Activated CD4-positive, alpha-beta memory T cell treated with anti-CD3 and anti-CD28 coated beads, Interleukin-2, amount 10 ng/mL, durations not matched to agents 7 days and 5 days (primary cell): ENCODE measurements at regions of chr21 and their contacts with region 1.

Region 1: GRCh38 chr21:17780539-17780938 is 38.6 kb downstream of the C21orf91 start:
- DNase-seq: peak; percentile 61
- H3K4me3 Mint-ChIP-seq: peak overlapping the region; percentile 19
- H3K27ac Mint-ChIP-seq: peak overlapping the region; percentile 93
- H3K4me1 Mint-ChIP-seq: peaks cover 88% of the 10 kb centered on the region
- H3K27me3 Mint-ChIP-seq: no peaks in the 10 kb centered on the region

Region 2: GRCh38 chr21:17611414-17612022 is 169.0 kb before region 1 on chr21:
- CTCF ChIA-PET with region 1: no interaction called
- POLR2A ChIA-PET with region 1: interaction called, 26 read pairs
- DNase-seq: peak; percentile 85
- H3K4me3 Mint-ChIP-seq: peak overlapping the region; percentile 98
- H3K27ac Mint-ChIP-seq: peak overlapping the region; percentile 98
- H3K4me1 Mint-ChIP-seq: peaks cover 64% of the 10 kb centered on the region
- H3K27me3 Mint-ChIP-seq: no peaks in the 10 kb centered on the region

Region 3: DNA sequence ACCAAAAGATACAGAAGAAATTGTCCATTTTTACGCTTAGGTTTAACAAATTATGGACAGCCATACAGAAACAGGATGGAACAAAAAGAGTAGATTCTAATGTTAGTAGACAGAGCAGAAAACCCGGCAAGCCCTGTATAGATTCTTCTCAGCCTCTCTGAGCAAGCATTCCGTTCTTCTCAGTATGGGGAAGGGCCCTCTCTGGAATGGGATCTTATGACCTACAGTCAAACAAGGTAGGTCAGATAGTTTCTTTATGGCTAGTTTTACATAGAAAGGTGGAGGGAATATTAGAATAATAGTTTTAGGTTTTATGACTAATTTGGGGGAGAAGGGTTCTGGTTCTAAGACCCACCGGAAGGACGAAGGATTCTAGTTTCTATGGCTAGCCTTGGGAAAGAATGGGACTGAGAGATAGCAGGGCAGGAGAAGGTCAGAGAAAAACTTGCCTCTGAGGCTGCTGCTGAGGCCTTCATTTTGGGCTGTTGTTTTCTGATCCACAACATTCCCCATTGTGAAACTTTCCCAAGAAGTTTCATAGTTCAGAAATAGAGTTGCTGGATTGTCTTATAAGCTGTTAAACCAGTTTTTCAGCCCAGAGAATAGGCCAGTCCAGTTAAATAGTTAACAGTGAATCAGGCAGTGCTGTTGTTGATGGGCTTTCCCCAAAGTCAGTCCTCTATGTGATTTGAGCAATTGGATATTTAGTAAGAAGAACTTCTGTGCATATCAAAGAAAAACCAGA is 38.6 kb before region 1 on chr21:
- CTCF ChIA-PET with region 1: no interaction called
- POLR2A ChIA-PET with region 1: no interaction called
- DNase-seq: no peak
- H3K4me3 Mint-ChIP-seq: no peak overlapping the region
- H3K27ac Mint-ChIP-seq: no peak overlapping the region
- H3K4me1 Mint-ChIP-seq: no peaks in the 10 kb centered on the region
- H3K27me3 Mint-ChIP-seq: no peaks in the 10 kb centered on the region

Region 4: DNA sequence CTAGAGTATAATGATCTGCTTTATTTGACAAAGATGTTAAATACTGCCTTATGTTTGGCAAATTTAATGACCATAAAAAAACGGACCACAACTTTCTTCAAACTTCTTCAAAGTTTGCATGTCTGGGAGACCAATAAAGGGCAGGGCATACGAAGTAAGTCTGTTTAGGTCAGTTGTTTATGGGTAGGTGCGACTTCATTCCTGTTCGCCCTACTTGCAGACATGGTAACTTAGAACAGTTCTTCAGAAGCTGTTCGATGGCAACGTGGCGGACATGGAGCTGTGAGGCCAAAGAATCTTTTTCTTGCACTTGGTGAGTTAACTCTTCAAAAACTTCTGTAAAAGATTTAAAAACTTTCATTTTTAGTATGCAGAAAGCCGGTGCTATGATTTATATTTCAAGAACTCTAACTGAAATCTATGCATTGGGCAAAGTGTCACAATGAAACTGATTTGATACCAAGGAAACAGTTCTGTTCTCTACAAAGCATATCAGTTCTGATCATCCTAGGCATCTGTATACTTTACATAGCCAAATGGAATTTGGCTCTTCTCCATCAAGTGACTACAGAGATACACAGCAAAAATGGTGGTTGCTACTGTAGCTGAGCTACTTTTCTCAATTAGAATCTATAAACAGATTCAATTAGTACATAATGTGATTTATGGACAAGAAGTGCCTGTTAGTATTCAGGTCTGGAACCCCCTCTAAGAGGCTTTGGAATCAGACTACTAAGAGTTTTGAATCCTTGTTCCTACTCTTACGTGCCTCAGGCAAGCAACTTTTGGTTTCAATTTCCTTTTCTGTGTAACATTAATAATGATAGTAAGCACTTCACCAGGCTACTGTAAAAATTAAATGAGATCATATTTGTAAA is 12.9 kb after region 1 on chr21:
- CTCF ChIA-PET with region 1: interaction called, 7 read pairs
- POLR2A ChIA-PET with region 1: interaction called, 110 read pairs
- DNase-seq: no peak
- H3K4me3 Mint-ChIP-seq: peak overlapping the region; percentile 75
- H3K27ac Mint-ChIP-seq: peak overlapping the region; percentile 90
- H3K4me1 Mint-ChIP-seq: peaks cover 72% of the 10 kb centered on the region
- H3K27me3 Mint-ChIP-seq: no peaks in the 10 kb centered on the region

Region 5: DNA sequence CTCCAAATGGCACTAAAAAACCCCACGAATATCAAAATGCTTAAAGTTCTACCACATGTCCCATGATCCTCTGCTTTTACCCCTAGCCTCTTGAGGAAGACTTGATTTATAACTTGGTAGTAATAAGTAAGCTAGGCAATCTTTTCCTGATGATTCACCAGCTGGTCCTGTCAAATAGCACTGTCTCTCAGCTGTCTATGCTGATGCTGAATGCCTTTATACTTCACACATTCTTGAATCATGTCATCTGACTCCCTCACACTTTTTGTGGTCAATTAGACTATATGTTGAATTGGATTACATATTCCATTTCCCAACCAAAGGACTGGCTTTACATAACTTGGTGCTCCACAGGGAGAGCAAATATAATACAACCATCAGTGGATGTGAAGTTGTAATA is 22.0 kb after region 1 on chr21:
- CTCF ChIA-PET with region 1: no interaction called
- POLR2A ChIA-PET with region 1: interaction called, 11 read pairs
- DNase-seq: no peak
- H3K4me3 Mint-ChIP-seq: no peak overlapping the region
- H3K27ac Mint-ChIP-seq: no peak overlapping the region
- H3K4me1 Mint-ChIP-seq: peaks cover 40% of the 10 kb centered on the region
- H3K27me3 Mint-ChIP-seq: no peaks in the 10 kb centered on the region

Region 6: DNA sequence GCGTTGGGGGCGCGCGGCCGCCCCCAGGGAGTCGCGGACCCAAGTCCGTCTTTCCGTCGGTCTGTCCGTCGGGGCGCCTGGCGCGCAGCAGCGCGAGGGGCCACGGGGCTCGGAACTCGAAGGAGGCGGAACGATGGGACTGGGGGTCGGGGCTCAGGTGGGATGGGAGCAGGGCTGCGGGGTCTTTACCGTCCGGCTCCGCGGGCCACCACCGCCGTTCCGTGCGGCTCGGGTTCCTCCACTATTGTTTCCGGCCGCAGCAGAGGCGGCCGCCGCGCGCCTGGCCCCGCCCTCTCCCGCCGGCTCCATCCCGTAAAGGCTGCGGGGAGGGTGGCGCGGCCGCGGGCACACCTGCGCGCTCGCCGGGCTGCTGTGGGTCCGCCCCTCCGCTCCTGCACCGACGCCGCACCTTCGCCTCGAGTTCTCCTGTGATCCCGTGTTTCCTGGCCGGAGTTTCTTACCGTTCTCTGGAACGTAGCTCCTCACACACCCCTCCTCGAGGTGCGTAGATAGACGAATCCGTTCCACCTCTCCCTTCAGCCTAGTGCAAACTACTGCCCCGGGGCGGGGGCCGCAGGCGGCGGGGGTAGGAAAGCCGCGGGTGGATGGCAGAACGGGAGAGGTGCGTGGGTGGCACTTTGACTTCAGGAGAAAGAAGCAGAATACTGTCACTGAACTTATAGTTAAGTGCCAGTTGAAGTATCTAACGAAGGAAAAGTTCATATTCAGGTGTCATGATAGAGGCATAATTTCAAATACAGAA is 38.8 kb after region 1 on chr21 and contains the start of gene C21orf91:
- CTCF ChIA-PET with region 1: interaction called, 16 read pairs
- POLR2A ChIA-PET with region 1: interaction called, 96 read pairs
- DNase-seq: peak; percentile 92
- H3K4me3 Mint-ChIP-seq: peak within 1 kb of the TSS; percentile 88
- H3K27ac Mint-ChIP-seq: peak within 1 kb of the TSS; percentile 99
- H3K4me1 Mint-ChIP-seq: peaks cover 44% of the 10 kb centered on the region
- H3K27me3 Mint-ChIP-seq: no peaks in the 10 kb centered on the region
- total RNA-seq, gene C21orf91: 55.9 to 57.1 TPM